ENCODE measurements at regions of chr11 and their contacts with region 1.

Region 1: DNA sequence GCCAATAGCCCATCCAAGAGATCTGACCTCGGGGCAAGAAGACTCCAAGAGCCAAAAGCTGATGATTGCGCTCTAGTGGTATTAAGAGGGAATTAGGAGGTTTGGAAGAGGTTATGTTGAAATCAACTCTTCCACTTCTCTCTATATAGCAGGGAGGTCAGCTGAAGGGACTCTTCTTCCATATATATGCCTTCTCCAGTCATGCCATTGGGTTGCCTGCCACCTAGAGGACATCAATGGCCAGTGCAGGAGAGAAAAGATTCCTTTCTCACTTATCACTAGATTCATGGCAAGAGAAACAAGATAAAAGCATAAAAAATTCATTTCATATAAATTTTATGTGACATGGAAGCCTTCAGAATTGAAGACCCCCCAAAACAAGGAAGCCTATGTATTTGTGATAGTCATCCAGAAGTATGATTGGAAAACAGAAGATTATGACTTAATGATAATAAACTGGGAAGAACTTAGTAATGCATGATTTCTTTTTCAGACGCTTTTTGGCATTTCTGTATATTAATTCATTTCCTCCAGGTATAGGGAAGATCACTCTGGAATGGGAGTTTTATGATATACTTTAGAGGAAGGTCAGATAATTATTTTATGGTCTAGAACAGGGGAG is 435.1 kb upstream of the DDI1 start:
- DNase-seq: peak in 3 of 5 donors; percentile 12 to 22 (median 21)
- ATAC-seq: peak in 3 of 4 donors; percentile 55 to 81 (median 73)
- H3K4me3 ChIP-seq: no peak overlapping the region
- H3K27ac ChIP-seq: no peak overlapping the region
- H3K4me1 ChIP-seq: no peaks in the 10 kb centered on the region
- H3K27me3 ChIP-seq: no peaks in the 10 kb centered on the region
- CTCF ChIP-seq: peak; percentile 78 to 93 (median 86)
- POLR2A ChIP-seq: no peak

Region 2: DNA sequence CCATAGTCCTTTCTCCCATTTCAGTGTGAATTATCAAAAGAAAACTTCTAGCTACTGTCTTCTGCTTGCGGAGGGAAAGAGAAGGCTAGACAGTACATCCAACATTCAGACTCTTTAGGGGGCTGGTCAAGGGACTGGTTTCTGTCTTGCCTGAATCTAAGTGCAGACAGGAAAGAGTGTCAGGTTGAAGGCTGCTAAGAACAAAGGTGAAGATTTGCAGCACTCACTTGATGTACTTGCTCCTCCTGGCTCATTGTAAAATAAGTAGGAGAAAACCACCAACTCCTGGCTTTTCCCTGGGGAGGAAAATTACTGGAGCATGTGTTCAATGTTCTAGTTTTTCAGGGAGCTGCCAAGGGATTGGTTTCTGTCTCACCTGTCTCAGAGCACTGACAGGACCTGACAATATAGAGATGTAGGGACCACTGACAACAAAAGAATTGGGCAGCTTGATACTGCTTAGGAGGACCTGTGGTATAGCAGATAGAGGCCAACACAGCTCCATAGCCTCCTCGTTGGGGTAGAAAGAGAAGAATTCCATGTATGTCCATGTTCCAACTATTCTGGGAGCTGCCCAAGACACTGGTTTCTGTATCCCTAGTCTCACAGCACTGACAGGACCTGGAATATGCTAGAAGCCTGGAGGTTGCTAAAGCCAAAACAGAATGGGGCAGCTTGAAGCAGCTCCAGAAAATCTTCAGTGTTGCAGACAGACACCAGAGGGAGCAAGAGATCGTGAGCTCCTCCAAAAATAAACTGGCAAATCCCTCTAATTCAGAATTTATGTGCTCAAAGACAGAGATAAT is 686.9 kb before region 1 on chr11:
- intact Hi-C with region 1: no loop called
- DNase-seq: no peak
- ATAC-seq: peak in 2 of 4 donors; percentile 18 to 42
- H3K4me3 ChIP-seq: no peak overlapping the region
- H3K27ac ChIP-seq: peak overlapping the region in 1 of 12 donors; percentile 38
- H3K4me1 ChIP-seq: no peaks in the 10 kb centered on the region
- H3K27me3 ChIP-seq: peaks cover 0 to 18% (median 0%) of the 10 kb centered on the region in 9 donors
- CTCF ChIP-seq: peak in 11 of 12 donors; percentile 25 to 54 (median 38)
- POLR2A ChIP-seq: no peak

Region 3: DNA sequence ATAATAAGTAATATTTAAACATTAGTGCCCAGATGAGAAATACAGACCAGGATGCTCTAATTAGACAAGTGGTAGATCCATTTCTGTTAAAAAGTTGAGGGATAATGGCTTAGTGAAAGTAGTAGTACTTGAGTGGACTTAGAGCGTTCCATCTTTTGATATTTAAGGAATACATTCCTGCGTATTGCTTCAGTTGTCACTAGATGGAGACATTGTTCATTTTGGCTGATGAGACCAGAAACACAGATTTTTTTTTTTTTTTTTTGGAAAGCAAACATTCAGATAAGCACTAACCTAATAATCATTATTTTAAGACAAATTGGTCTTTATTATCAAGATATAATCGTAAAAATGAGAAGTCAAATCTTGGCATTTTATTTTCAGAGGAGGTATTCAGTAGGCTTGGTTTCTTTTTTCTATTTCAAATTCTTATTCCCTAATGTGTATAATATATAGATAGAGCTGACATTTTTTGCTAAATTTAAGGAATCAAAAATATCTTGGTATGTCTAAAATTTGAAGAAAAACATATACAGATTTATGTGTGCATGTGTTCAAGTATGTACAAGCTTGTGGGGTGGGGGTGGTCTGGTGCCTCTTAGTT is 399.2 kb before region 1 on chr11:
- intact Hi-C with region 1: loop called in 9 of 10 experiments (anchors 2 to 10 kb)
- DNase-seq: no peak
- ATAC-seq: peak in 1 of 4 donors; percentile 34
- H3K4me3 ChIP-seq: no peak overlapping the region
- H3K27ac ChIP-seq: no peak overlapping the region
- H3K4me1 ChIP-seq: no peaks in the 10 kb centered on the region
- H3K27me3 ChIP-seq: no peaks in the 10 kb centered on the region
- CTCF ChIP-seq: peak; percentile 26 to 62 (median 42)
- POLR2A ChIP-seq: no peak

Region 4: DNA sequence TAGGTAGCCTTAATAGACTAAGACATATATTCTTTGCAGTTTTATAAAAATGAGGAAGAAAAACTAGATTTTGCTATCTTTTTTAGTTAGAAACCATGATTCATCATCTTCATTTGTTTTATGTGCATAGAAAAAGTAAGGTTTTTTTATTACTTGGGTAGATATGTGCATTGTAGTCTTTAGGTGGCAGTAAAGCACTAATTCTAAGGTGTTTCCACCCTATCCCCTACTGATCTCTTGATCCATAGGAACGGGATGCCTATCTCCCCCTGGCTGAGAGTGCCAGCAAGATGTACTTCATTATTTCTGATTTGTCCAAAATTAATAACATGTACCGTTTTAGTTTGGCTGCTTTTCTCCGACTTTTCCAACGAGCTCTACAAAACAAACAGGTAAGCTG is 344.0 kb before region 1 on chr11:
- intact Hi-C with region 1: loop called in 2 of 10 experiments (anchors 5 kb)
- DNase-seq: no peak
- ATAC-seq: no peak
- H3K4me3 ChIP-seq: no peak overlapping the region
- H3K27ac ChIP-seq: no peak overlapping the region
- H3K4me1 ChIP-seq: no peaks in the 10 kb centered on the region
- H3K27me3 ChIP-seq: no peaks in the 10 kb centered on the region
- CTCF ChIP-seq: peak in 3 of 12 donors; percentile 18 to 27 (median 25)
- POLR2A ChIP-seq: no peak

Region 5: GRCh38 chr11:103326070-103326794 is 275.1 kb before region 1 on chr11:
- intact Hi-C with region 1: loop called (anchors 1 to 5 kb)
- DNase-seq: peak in 4 of 5 donors; percentile 15 to 42 (median 28)
- ATAC-seq: peak in 3 of 4 donors; percentile 77 to 86 (median 83)
- H3K4me3 ChIP-seq: no peak overlapping the region
- H3K27ac ChIP-seq: no peak overlapping the region
- H3K4me1 ChIP-seq: peaks cover 0 to 14% (median 7%) of the 10 kb centered on the region in 12 donors
- H3K27me3 ChIP-seq: no peaks in the 10 kb centered on the region
- CTCF ChIP-seq: peak; percentile 44 to 73 (median 56)
- POLR2A ChIP-seq: no peak

Region 6: DNA sequence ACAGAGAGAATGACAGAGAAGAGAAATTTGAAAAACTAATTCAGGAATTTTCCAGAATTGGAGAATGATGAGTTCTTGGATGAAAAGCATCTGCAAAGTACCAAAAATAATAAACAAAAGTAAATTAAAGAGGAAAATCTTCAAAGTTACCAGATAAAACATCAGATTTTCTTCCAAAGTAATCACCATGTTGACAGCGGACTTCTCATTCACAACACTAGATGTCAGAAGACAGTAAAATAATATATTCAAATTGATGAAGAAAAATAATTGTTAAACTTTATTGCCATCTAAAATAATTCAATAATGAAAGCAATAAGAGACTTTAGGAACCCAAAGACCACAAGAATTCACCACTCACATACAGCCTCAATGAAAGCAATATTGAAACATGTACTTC is 136.9 kb before region 1 on chr11:
- intact Hi-C with region 1: loop called in 3 of 10 experiments (anchors 5 to 10 kb)
- DNase-seq: no peak
- ATAC-seq: no peak
- H3K4me3 ChIP-seq: no peak overlapping the region
- H3K27ac ChIP-seq: no peak overlapping the region
- H3K4me1 ChIP-seq: no peaks in the 10 kb centered on the region
- H3K27me3 ChIP-seq: no peaks in the 10 kb centered on the region
- CTCF ChIP-seq: peak in 1 of 12 donors; percentile 7
- POLR2A ChIP-seq: no peak

Region 7: GRCh38 chr11:103494491-103494890 is 106.8 kb before region 1 on chr11:
- intact Hi-C with region 1: no loop called
- DNase-seq: no peak
- ATAC-seq: no peak
- H3K4me3 ChIP-seq: no peak overlapping the region
- H3K27ac ChIP-seq: no peak overlapping the region
- H3K4me1 ChIP-seq: no peaks in the 10 kb centered on the region
- H3K27me3 ChIP-seq: no peaks in the 10 kb centered on the region
- CTCF ChIP-seq: no peak
- POLR2A ChIP-seq: no peak

Region 8: GRCh38 chr11:103714246-103714645 is 112.9 kb after region 1 on chr11:
- intact Hi-C with region 1: no loop called
- DNase-seq: no peak
- ATAC-seq: no peak
- H3K4me3 ChIP-seq: no peak overlapping the region
- H3K27ac ChIP-seq: no peak overlapping the region
- H3K4me1 ChIP-seq: no peaks in the 10 kb centered on the region
- H3K27me3 ChIP-seq: no peaks in the 10 kb centered on the region
- CTCF ChIP-seq: no peak
- POLR2A ChIP-seq: no peak